ENCODE measurements at regions of chr1 and their contacts with region 1.

Region 1: DNA sequence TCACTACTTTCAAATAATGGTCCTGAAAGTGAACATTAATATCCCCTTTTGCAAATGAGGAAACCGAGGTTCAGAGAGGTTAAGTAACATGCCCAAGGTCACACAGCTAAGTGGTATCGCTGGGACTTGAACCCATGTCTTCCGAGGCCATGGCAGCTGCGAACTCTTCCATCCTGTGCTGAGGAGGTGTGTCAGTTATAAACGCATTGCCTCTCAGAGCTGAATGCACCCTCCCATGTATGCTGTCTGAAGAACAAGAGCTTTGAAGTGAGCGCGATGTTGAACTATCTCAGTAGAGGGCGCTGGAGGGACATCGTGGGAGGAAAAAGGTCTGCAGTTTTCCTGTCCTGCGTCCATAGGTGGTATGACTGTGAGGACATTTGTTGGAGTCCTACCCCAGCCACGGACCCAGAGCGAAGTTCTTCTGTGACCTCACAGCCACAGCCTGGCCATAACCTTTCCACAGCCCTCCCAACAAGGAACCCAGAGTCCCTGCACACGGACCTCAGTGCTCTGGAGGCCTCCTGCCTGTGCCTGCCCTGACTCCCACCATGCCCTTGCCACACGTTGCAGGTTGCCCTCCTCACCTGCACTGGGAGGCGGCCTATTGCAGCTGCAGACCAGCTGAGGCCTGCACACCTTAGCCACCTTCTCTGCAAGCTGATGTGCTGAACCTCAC is 7.5 kb downstream of the MYOC start:
- DNase-seq: peak; percentile 84
- ATAC-seq: peak; percentile 98
- H3K4me3 Mint-ChIP-seq: no peak overlapping the region
- H3K27ac Mint-ChIP-seq: no peak overlapping the region
- H3K4me1 Mint-ChIP-seq: peaks cover 6% of the 10 kb centered on the region
- H3K27me3 Mint-ChIP-seq: no peaks in the 10 kb centered on the region

Region 2: GRCh38 chr1:170789063-170789462 is 855.9 kb before region 1 on chr1:
- CTCF ChIA-PET with region 1: no interaction called
- POLR2A ChIA-PET with region 1: no interaction called
- intact Hi-C with region 1: no loop called
- DNase-seq: no peak
- ATAC-seq: no peak
- H3K4me3 Mint-ChIP-seq: no peak overlapping the region
- H3K27ac Mint-ChIP-seq: no peak overlapping the region
- H3K4me1 Mint-ChIP-seq: no peaks in the 10 kb centered on the region
- H3K27me3 Mint-ChIP-seq: peaks cover 3% of the 10 kb centered on the region

Region 3: DNA sequence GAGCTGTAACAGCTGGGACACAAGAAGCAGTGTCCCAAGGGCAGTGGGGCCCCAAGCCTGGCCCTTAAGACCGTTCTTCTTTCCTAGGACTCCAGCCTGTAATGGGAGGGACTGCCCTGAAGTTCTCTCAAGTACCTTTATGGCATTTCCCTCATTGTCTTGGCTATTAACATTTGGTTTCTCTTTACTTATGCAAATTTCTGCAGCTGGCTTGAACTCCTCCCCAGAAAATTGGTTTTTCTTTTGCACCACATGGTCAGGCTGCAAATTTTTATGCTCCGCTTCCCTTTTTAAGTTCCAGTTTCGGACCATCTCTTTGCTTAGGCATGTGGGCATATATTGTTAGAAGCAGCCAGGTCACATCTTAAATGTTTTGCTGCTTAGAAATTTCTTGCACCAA is 712.7 kb before region 1 on chr1:
- CTCF ChIA-PET with region 1: no interaction called
- POLR2A ChIA-PET with region 1: no interaction called
- intact Hi-C with region 1: no loop called
- DNase-seq: no peak
- ATAC-seq: no peak
- H3K4me3 Mint-ChIP-seq: no peak overlapping the region
- H3K27ac Mint-ChIP-seq: no peak overlapping the region
- H3K4me1 Mint-ChIP-seq: no peaks in the 10 kb centered on the region
- H3K27me3 Mint-ChIP-seq: peaks cover 4% of the 10 kb centered on the region

Region 4: GRCh38 chr1:171595324-171595723 is 49.6 kb before region 1 on chr1:
- CTCF ChIA-PET with region 1: interaction called, 3 read pairs
- POLR2A ChIA-PET with region 1: no interaction called
- intact Hi-C with region 1: loop called in 1 of 2 experiments (anchors 5 kb)
- DNase-seq: no peak
- ATAC-seq: peak; percentile 39
- H3K4me3 Mint-ChIP-seq: no peak overlapping the region
- H3K27ac Mint-ChIP-seq: no peak overlapping the region
- H3K4me1 Mint-ChIP-seq: no peaks in the 10 kb centered on the region
- H3K27me3 Mint-ChIP-seq: no peaks in the 10 kb centered on the region

Region 5: DNA sequence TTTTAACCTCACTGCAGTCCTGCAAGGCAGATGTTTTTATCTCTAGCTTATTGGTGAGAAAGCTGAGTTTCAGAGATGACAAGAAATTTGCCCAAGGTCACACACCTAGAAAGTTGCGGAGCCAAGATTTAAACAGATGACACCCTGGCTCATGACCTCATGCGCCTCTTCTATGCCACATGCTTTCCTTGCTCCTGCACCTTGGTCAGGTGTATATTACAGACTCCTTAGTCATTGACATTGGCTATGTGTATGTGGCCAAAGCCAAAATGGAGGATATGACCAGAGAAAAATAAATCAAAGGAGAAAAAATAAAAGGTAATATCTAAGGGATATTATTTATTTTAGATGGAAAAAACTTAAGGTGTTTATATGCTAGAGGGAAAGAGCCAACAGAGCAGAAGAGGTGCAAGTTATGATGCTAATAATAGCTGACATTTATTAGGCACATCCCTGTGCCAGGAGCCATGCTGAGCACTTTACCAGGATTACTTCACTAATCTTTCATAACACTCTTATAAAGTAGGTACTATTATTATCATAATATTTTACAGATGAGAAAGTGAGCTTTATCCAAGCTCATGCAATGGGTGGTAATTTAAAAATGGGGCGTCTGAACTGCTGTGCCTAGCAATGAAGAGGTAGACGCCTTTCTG is 21.3 kb after region 1 on chr1:
- CTCF ChIA-PET with region 1: interaction called, 12 read pairs
- POLR2A ChIA-PET with region 1: no interaction called
- intact Hi-C with region 1: no loop called
- DNase-seq: no peak
- ATAC-seq: no peak
- H3K4me3 Mint-ChIP-seq: no peak overlapping the region
- H3K27ac Mint-ChIP-seq: no peak overlapping the region
- H3K4me1 Mint-ChIP-seq: no peaks in the 10 kb centered on the region
- H3K27me3 Mint-ChIP-seq: no peaks in the 10 kb centered on the region

Region 6: GRCh38 chr1:171781176-171781875 is 136.4 kb after region 1 on chr1 and contains the start of gene METTL13:
- CTCF ChIA-PET with region 1: interaction called, 3 read pairs
- POLR2A ChIA-PET with region 1: no interaction called
- intact Hi-C with region 1: loop called in 1 of 2 experiments (anchors 2 kb)
- DNase-seq: peak; percentile 99
- ATAC-seq: peak; percentile 97
- H3K4me3 Mint-ChIP-seq: peak within 1 kb of the TSS; percentile 92
- H3K27ac Mint-ChIP-seq: peak within 1 kb of the TSS; percentile 97
- H3K4me1 Mint-ChIP-seq: peaks cover 57% of the 10 kb centered on the region
- H3K27me3 Mint-ChIP-seq: no peaks in the 10 kb centered on the region
- total RNA-seq, gene METTL13: 41.1 to 52.9 TPM

Region 7: DNA sequence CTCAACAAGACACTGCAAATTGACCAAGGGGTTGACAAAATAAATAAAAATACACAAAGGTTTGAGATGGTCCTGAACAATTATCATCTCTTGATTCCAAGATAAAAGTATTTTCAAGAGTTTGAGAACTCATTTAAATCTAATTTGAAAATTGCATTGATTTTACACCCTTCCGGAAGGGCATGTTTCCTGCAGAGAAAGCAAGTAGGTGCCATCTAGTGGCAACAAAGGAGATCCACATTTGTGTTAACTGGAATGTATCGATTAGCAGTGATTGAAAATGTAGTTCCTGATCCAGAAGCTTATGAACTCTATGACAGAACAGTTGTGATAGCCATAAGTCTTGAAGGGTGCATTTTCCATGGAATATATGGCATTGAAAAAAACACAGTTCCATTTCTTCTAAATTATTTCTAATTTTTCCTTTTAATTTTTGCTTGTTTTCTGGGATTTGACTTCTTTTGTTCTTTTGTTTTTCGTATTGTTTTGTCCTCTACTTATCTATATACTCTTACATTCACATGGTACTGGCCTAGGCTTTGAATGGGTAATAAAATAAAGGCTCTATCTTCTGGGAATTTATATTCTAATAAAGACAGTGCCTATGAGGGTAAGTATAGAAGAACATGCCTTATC is 340.0 kb after region 1 on chr1:
- CTCF ChIA-PET with region 1: interaction called, 39 read pairs
- POLR2A ChIA-PET with region 1: no interaction called
- intact Hi-C with region 1: loop called (anchors 1 to 2 kb)
- DNase-seq: peak; percentile 8
- ATAC-seq: peak; percentile 58
- H3K4me3 Mint-ChIP-seq: no peak overlapping the region
- H3K27ac Mint-ChIP-seq: no peak overlapping the region
- H3K4me1 Mint-ChIP-seq: no peaks in the 10 kb centered on the region
- H3K27me3 Mint-ChIP-seq: no peaks in the 10 kb centered on the region